Naive thymus-derived CD4-positive, alpha-beta T cell (primary cell): ENCODE measurements at regions of chr17 and their contacts with region 1.

Region 1: DNA sequence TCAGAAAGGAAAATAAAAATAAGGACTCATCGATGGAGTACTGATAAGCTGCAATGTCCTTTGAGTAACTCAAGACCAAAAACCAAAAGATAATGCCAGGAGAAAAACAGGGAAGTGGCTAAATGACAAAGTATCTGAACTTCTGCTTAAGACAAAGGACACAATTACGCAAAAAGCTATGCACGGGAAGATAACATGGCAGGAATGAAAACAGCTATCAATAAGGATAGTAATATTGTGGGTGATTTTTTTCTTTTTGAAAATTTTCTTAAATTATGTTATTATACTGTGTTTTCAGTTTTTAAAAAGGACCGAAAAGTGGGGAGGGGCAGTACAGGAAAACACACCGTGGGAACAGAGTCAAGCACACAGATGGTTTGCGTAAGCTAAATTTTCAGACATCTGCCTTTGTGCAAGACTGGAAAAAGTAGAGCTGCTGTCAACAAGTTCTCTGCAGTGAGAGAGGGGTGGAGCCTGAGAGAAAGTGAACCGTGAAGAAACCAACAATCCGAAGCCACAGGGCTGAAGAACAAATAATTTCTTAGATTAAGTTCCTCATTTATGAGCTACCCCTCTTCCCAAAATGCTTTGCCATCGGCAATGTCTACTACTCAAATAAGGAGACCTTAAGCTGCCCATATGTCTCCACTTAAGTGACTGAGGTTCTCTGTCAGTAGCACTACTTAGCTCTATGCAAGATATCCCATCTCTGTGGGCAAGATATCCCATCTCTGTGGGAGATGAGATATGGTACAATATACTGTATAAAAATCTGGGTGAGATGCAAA is 99.9 kb upstream of the CORO6 start:
- DNase-seq: peak in 7 of 9 donors; percentile 69 to 85 (median 80)
- ATAC-seq: peak; percentile 84
- H3K4me3 ChIP-seq: peak overlapping the region; percentile 32
- H3K4me3 Mint-ChIP-seq: peak overlapping the region; percentile 55 to 92 (median 72)
- H3K27ac ChIP-seq: peak overlapping the region; percentile 72
- H3K27ac Mint-ChIP-seq: peak overlapping the region; percentile 21 to 98 (median 92)
- H3K4me1 ChIP-seq: peaks cover 56 to 74% of the 10 kb centered on the region in 2 donors
- H3K4me1 Mint-ChIP-seq: peaks cover 55 to 94% (median 85%) of the 10 kb centered on the region in 7 donors
- H3K27me3 ChIP-seq: no peaks in the 10 kb centered on the region
- H3K27me3 Mint-ChIP-seq: no peaks in the 10 kb centered on the region

Region 2: GRCh38 chr17:29682054-29682453 is 40.6 kb before region 1 on chr17:
- CTCF ChIA-PET with region 1: interaction called, 3 read pairs
- POLR2A ChIA-PET with region 1: interaction called, 5 read pairs
- intact Hi-C with region 1: loop called (anchors 5 kb)
- DNase-seq: peak in 2 of 9 donors; percentile 15 to 17
- ATAC-seq: peak; percentile 76
- H3K4me3 ChIP-seq: no peak overlapping the region
- H3K4me3 Mint-ChIP-seq: peak overlapping the region in 3 of 10 donors; percentile 0 to 7 (median 2)
- H3K27ac ChIP-seq: no peak overlapping the region
- H3K27ac Mint-ChIP-seq: peak overlapping the region in 7 of 9 donors; percentile 21 to 80 (median 43)
- H3K4me1 ChIP-seq: peaks cover 0 to 9% of the 10 kb centered on the region in 2 donors
- H3K4me1 Mint-ChIP-seq: peaks cover 12 to 51% (median 28%) of the 10 kb centered on the region in 7 donors
- H3K27me3 ChIP-seq: no peaks in the 10 kb centered on the region
- H3K27me3 Mint-ChIP-seq: no peaks in the 10 kb centered on the region

Region 3: DNA sequence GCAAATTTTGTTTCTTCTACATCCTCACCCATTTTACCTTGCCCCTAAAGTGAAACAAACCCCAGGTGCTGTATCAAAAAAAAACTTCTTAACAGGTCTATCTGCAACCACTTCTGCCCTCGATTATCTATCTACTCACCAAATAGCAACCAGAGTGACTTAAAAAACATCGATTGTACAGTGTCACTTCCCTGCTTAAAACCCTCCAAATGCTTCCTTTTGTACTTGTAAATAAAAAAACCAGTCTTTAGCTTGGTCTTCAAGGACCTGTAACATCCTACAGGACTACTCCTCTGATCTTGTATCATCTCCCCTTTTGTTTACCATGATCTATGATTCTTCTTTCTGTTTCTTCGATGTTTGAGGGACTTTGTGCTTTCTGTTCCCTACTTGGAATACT is 17.2 kb before region 1 on chr17:
- CTCF ChIA-PET with region 1: interaction called, 4 read pairs
- POLR2A ChIA-PET with region 1: interaction called, 102 read pairs
- intact Hi-C with region 1: loop called (anchors 1 to 2 kb)
- DNase-seq: peak in 6 of 9 donors; percentile 16 to 41 (median 24)
- ATAC-seq: peak; percentile 6
- H3K4me3 ChIP-seq: peak overlapping the region; percentile 22
- H3K4me3 Mint-ChIP-seq: peak overlapping the region; percentile 4 to 81 (median 72)
- H3K27ac ChIP-seq: peak overlapping the region; percentile 73
- H3K27ac Mint-ChIP-seq: peak overlapping the region; percentile 85 to 99 (median 96)
- H3K4me1 ChIP-seq: peaks cover 35 to 41% of the 10 kb centered on the region in 2 donors
- H3K4me1 Mint-ChIP-seq: peaks cover 18 to 69% (median 51%) of the 10 kb centered on the region in 7 donors
- H3K27me3 ChIP-seq: no peaks in the 10 kb centered on the region
- H3K27me3 Mint-ChIP-seq: no peaks in the 10 kb centered on the region

Region 4: GRCh38 chr17:29732613-29733012 is 10.0 kb after region 1 on chr17:
- CTCF ChIA-PET with region 1: interaction called, 4 read pairs
- POLR2A ChIA-PET with region 1: interaction called, 24 read pairs
- intact Hi-C with region 1: no loop called
- DNase-seq: no peak
- ATAC-seq: no peak
- H3K4me3 ChIP-seq: no peak overlapping the region
- H3K4me3 Mint-ChIP-seq: peak overlapping the region in 3 of 10 donors; percentile 13 to 48 (median 24)
- H3K27ac ChIP-seq: no peak overlapping the region
- H3K27ac Mint-ChIP-seq: peak overlapping the region in 8 of 9 donors; percentile 6 to 91 (median 76)
- H3K4me1 ChIP-seq: peaks cover 2 to 10% of the 10 kb centered on the region in 2 donors
- H3K4me1 Mint-ChIP-seq: peaks cover 12 to 72% (median 61%) of the 10 kb centered on the region in 7 donors
- H3K27me3 ChIP-seq: no peaks in the 10 kb centered on the region
- H3K27me3 Mint-ChIP-seq: no peaks in the 10 kb centered on the region

Region 5: DNA sequence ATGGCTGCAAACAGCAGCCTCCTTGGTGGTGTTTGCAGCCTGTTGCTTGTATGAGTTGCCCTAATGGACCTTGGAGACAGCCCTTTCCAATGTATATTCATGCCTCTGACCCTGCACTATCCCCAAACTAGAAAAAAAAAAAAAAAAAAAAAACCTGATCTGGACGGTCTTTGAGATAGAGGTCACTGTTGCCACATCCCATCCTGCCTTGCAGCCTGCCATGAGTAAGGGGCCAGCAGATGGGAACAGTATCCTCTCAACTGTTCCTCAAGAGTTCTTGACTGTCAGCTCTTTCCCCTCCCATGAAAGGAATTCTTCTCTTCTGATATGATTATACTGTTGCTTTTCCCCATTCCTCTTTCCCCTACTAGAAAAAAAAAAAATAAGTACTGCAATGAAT is 55.1 kb after region 1 on chr17:
- CTCF ChIA-PET with region 1: interaction called, 5 read pairs
- POLR2A ChIA-PET with region 1: interaction called, 6 read pairs
- intact Hi-C with region 1: loop called in 1 of 2 experiments (anchors 1 kb)
- DNase-seq: no peak
- ATAC-seq: no peak
- H3K4me3 ChIP-seq: no peak overlapping the region
- H3K4me3 Mint-ChIP-seq: no peak overlapping the region
- H3K27ac ChIP-seq: no peak overlapping the region
- H3K27ac Mint-ChIP-seq: no peak overlapping the region
- H3K4me1 ChIP-seq: peaks cover 0 to 5% of the 10 kb centered on the region in 2 donors
- H3K4me1 Mint-ChIP-seq: peaks cover 0 to 9% (median 8%) of the 10 kb centered on the region in 7 donors
- H3K27me3 ChIP-seq: no peaks in the 10 kb centered on the region
- H3K27me3 Mint-ChIP-seq: no peaks in the 10 kb centered on the region